Tibial artery (tissue), 4 donors: ENCODE measurements at regions of chr5 and their contacts with region 1.

Region 1: DNA sequence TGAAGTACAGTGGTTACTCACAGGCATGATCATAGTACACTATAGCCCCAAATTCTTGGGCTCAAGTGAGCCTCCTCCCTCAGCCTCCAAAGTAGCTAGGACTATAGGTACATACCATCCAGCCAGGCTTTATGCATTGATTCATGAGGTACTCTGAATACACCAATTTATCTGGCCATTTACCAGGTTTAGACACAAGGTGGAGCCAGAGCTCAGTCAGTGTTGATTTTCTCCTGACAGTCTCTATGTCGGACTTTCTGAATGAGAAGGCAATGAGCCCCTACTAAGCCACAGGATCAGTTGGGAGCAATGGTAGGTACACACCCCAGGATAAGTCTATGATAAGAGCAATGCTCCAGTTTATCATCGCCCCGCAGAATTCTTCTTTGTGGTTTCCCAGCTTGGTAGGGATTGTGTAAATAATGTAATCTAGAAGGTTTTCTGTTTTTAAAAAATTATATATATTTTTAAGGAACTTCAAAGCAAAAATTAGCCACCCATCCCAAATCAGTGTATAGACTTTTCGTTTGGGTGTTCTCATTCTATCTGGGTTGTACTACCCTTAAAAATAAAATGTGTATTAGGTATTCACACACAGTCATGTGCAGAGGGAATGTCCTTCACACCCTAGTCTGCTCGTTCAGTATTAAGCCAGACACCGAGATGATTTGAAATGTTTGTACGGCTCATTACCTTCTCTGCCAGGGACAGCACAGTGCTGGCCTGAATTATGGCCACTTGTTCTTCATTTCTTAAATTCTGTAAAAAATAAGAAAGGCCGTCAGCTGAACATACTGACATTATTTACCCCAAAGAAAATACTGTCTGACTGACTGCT is 118.4 kb upstream of the DPYSL3 start:
- DNase-seq: peak in 1 of 2 donors; percentile 48
- H3K4me3 ChIP-seq: no peak overlapping the region
- H3K27ac ChIP-seq: no peak overlapping the region
- H3K4me1 ChIP-seq: no peaks in the 10 kb centered on the region
- H3K27me3 ChIP-seq: no peaks in the 10 kb centered on the region
- CTCF ChIP-seq: peak; percentile 72 to 77

Region 2: DNA sequence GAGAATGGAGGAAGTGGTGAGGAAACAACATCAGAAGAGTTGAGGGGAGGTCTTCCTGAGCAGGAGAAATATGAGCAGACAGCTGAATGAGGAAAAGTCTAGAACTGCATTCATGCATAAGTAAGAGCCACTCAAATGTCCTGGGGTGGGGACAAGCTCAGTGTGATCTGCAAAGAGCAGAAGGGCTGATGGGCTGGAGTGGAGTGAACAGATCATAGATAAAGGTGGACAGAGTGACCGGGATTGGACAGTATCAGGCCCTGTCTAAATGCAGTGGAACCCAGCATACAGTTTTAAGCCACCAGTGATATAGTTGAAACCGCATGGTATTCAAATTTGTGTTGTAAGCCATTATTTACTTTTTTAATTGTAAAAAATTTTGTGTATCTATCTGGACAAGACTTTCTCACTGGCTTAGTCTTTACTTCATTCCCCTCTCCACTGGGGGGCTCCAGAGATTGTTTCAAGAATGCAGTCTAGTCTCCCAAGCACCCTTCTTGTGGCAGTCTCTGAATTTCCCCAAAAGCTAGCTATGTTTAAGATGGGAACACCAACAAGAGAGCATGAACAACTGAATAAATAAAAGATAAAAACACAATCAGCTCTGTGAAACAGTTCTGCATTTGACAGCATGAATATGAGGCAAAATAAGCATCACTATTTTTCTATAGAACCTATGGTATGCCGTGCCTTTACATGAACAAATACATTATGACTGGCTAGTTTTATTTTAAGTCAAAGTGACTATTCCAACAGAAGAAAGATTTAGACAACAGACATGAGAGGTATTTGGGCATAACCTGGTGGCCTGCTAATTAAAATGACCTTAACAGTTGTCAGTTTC is 404.1 kb before region 1 on chr5:
- intact Hi-C with region 1: no loop called
- DNase-seq: peak in 1 of 2 donors; percentile 52
- H3K4me3 ChIP-seq: no peak overlapping the region
- H3K27ac ChIP-seq: no peak overlapping the region
- H3K4me1 ChIP-seq: no peaks in the 10 kb centered on the region
- H3K27me3 ChIP-seq: no peaks in the 10 kb centered on the region
- CTCF ChIP-seq: peak; percentile 76 to 81

Region 3: DNA sequence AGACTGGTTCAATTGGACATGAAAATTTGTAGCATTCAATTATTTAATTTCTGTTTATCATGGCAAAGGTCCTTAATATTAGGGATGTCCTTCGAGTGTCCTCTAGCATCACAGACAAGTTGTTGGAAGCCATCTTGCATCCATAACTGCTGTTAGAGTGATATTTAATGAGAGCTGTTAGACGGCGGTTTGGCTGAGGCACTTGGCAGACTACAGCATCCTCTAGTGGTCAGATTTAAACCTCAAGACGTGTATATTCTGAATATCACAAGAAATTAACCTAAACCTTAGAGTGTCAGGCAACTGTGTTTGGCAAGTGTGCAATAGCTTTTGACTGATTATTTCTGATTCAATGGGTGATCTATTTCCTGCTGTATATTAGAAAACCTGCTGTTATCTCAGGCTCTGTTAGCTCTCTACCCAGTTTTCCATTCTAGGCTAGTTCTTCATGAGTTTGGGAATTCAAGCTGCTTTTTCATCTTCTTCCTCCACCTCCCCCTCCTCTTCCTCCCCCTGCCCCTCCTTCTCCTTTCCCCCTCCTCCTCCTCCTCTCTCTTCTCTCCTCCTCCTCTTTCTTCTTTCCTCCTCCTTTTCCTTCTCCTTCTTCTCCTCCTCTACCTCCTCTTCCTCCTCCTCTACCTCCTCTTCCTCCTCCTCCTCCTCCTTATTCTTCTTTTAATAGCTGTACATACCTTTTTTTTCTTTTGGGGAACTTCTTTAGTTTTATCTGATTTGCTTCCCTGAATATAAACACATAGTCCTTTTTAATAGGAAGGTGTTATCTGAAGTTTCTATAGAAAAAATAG is 194.6 kb after region 1 on chr5:
- intact Hi-C with region 1: loop called (anchors 5 kb)
- DNase-seq: peak in 1 of 2 donors; percentile 26
- H3K4me3 ChIP-seq: no peak overlapping the region
- H3K27ac ChIP-seq: no peak overlapping the region
- H3K4me1 ChIP-seq: no peaks in the 10 kb centered on the region
- H3K27me3 ChIP-seq: no peaks in the 10 kb centered on the region
- CTCF ChIP-seq: peak; percentile 89 to 90

Region 4: DNA sequence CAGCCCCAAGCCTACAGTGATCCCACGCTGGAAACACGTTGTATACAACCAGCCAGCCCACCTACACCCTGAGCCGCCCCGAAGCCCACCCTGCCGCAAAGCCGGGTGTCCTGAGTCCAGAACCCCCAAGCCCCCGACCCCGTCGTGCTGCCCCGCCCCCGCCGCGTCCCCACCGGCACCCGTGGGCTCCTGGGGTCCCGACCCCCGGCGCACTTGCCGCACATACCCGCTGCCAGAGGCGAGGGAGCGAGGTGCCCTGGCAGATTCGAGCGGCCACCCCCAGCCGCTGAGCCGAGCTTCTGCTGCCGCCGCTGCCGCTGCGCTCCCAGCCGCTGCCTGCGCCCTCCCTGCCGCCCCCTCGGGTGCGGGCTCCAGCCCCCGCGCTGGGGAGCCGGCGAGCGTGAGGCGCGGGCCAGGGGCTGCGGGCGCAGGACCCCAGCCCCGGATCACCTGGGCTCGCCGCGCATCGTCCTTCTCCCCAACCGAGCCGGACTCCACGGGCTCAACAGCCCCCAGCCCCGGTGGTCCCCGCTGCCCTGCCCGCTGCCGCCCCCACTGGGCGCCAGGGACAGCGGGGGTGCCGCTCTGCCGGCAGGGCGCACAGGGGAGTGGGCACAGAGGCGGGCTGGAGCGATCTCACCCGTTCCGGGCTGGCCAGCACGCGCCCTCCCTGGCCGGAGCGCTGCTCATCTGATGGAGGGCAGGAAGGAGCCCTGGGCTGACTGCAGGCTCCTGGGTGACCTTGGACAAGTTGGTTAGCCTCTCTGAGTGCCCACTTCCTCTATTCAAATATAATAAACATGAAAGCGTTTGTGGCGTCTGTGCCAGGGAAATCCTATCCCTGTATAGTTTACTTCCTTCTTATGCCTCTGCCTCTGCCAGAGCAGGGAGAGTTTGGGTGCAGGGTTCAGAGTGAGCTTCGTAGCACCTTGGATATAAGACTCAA is 1025.8 kb after region 1 on chr5 and contains the start of gene HTR4:
- intact Hi-C with region 1: loop called (anchors 5 kb)
- DNase-seq: no peak
- H3K4me3 ChIP-seq: peak within 1 kb of the TSS; percentile 35 to 50
- H3K27ac ChIP-seq: peak within 1 kb of the TSS in 1 of 2 donors; percentile 23
- H3K4me1 ChIP-seq: peaks cover 0 to 8% (median 2%) of the 10 kb centered on the region in 4 donors
- H3K27me3 ChIP-seq: peaks cover 0 to 14% of the 10 kb centered on the region in 2 donors
- CTCF ChIP-seq: no peak